Activated naive CD4-positive, alpha-beta T cell treated with anti-CD3 and anti-CD28 coated beads for 36 hours (primary cell): ENCODE measurements at regions of chr12 and their contacts with region 1.

Region 1: DNA sequence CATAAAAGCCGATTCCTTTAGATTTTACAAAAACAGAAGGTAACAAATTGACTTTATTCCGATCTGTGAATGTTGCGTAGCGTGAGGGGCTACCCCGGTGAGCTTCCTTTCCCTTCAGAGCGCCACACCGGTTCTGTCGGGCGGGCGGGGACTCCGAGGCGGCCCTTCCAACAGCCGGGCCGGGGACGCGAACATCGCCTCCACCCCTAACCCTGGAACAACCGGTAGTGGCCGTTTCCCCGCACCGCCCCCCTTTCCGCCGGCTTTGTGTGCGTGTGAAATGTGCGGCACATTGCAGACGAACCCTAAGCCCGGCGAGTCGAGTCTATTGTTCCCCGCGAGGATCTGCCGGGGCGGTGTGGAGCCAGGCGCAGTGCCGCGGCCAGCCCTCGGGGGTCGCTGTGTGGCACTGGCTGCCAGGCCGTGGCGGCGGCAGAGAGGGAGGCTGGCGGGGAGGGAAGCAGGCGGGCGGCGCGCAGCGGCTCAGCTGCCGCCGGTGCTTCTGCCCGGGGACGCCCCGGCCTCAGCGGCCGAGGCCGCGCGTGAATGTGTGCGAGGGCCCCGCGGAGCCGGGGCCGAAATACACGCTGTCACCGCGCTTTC is 775 bp upstream of the ARID2 start:
- DNase-seq: peak; percentile 96
- H3K4me3 Mint-ChIP-seq: peak overlapping the region; percentile 95
- H3K27ac Mint-ChIP-seq: peak overlapping the region; percentile 99
- H3K4me1 Mint-ChIP-seq: peaks cover 19% of the 10 kb centered on the region
- H3K27me3 Mint-ChIP-seq: no peaks in the 10 kb centered on the region

Region 2: DNA sequence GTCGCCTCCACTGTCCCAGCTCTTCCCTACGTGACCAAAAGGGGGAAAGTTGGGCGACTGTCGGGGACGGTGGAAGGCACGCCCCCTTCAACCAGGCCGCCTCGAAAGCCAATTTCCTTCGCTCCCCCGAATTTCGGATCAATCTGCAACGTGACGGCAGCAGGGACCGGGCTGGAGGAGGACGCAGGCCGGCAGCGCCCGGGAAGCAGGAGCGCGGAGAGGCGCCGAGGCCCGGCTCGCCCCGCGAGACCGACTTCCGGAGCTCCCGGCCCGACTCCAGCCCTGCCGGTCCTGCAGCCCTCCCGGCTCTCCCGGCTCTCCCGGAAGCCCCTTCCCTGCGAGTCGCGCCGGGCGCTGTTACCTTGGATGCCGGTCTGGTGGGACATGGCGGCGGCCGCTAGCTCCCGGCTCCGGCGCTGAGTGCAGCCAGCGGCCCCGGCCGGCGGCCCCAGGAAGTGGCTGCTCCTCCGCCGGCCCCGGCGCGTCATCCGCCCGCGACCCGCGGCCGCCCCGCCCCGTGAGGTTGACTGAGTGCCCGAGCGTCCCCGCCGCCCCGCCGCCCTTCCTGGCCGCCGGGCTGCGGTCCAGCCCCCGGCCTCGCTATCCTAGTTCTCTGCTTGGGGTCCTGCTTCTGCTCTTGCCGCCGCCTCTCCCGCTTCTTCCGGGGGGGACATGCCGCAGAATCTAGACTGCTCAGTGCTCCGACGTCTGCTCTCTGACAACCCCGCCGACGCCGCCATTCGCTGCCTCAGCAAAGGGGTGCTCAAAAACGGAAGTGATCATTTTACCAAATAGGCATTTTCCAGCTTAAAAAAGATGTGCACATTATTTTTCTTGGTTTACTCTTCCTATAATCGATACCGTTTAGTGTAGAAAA is 1922.6 kb before region 1 on chr12 and contains the start of gene TWF1:
- CTCF ChIA-PET with region 1: no interaction called
- intact Hi-C with region 1: loop called (anchors 5 kb)
- DNase-seq: peak; percentile 88
- H3K4me3 Mint-ChIP-seq: peak within 1 kb of the TSS; percentile 98
- H3K27ac Mint-ChIP-seq: peak within 1 kb of the TSS; percentile 100
- H3K4me1 Mint-ChIP-seq: peaks cover 39% of the 10 kb centered on the region
- H3K27me3 Mint-ChIP-seq: no peaks in the 10 kb centered on the region
- total RNA-seq, gene TWF1: 12.9 to 15.3 TPM

Region 3: GRCh38 chr12:45215419-45216229 is 513.1 kb before region 1 on chr12 and contains the start of gene ANO6:
- CTCF ChIA-PET with region 1: no interaction called
- intact Hi-C with region 1: loop called (anchors 1 kb)
- DNase-seq: peak; percentile 82
- H3K4me3 Mint-ChIP-seq: peak within 1 kb of the TSS; percentile 97
- H3K27ac Mint-ChIP-seq: peak within 1 kb of the TSS; percentile 95
- H3K4me1 Mint-ChIP-seq: peaks cover 36% of the 10 kb centered on the region
- H3K27me3 Mint-ChIP-seq: no peaks in the 10 kb centered on the region
- total RNA-seq, gene ANO6: 12.9 to 14.6 TPM

Region 4: GRCh38 chr12:45655201-45655600 is 73.5 kb before region 1 on chr12:
- CTCF ChIA-PET with region 1: interaction called, 4 read pairs
- intact Hi-C with region 1: loop called (anchors 1 kb)
- DNase-seq: peak; percentile 70
- H3K4me3 Mint-ChIP-seq: no peak overlapping the region
- H3K27ac Mint-ChIP-seq: no peak overlapping the region
- H3K4me1 Mint-ChIP-seq: peaks cover 2% of the 10 kb centered on the region
- H3K27me3 Mint-ChIP-seq: peaks cover 2% of the 10 kb centered on the region

Region 5: GRCh38 chr12:46268590-46269558 is 540.1 kb after region 1 on chr12 and contains the start of gene SLC38A1:
- CTCF ChIA-PET with region 1: no interaction called
- intact Hi-C with region 1: loop called (anchors 1 kb)
- DNase-seq: peak; percentile 92
- H3K4me3 Mint-ChIP-seq: no peak within 1 kb of the TSS
- H3K27ac Mint-ChIP-seq: no peak within 1 kb of the TSS
- H3K4me1 Mint-ChIP-seq: peaks cover 34% of the 10 kb centered on the region
- H3K27me3 Mint-ChIP-seq: no peaks in the 10 kb centered on the region
- total RNA-seq, gene SLC38A1: 105 to 110 TPM

Region 6: GRCh38 chr12:47216150-47216677 is 1487.5 kb after region 1 on chr12:
- CTCF ChIA-PET with region 1: no interaction called
- intact Hi-C with region 1: loop called (anchors 5 kb)
- DNase-seq: peak; percentile 83
- H3K4me3 Mint-ChIP-seq: peak overlapping the region; percentile 94
- H3K27ac Mint-ChIP-seq: peak overlapping the region; percentile 100
- H3K4me1 Mint-ChIP-seq: peaks cover 12% of the 10 kb centered on the region
- H3K27me3 Mint-ChIP-seq: no peaks in the 10 kb centered on the region